Prostate gland (tissue), 2 donors: ENCODE measurements at regions of chr11 and their contacts with region 1.

Region 1: DNA sequence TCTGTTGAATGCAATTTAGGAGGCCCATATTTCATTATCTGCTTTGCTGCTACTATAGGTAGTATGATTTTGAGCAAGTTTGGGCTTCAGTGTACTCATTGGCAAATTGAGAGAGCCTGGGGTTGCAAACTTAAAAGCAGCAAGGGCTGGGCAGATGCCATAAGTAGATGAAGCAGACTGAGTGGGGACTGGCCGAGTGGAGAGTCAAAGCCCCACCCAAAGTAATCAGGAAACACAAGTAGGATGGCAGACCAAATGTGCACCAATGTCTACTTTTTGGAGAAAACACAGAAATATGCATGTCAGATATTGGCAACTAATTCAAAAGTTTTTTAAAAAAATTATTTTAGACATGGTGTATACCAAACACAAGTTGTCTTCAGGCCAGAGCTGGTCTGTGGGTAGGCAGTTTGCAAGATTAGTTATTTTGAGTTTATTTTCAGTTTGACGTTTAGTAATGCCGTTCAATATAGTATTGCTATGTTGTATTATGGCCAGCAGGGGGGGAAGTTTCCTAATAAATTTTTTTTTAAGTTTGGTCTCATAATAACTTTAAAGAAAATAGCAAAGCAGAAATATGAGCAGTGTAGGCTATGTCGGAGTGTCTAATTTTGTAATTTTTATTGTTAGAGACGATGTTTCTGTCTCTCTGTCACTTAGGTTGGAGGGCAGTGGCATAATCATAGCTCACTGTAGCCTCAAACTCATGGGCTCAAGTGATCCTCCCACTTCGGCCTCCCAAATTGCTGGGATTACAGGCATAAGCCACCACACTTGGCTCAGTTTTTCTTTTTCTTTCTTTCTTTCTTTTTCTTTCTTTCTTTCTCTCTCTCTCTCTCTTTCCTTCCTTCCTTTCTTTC is 105.1 kb downstream of the HIPK3 start:
- DNase-seq: peak; percentile 15
- H3K4me3 ChIP-seq: no peak overlapping the region
- H3K27ac ChIP-seq: no peak overlapping the region
- H3K4me1 ChIP-seq: no peaks in the 10 kb centered on the region
- H3K27me3 ChIP-seq: no peaks in the 10 kb centered on the region
- CTCF ChIP-seq: peak in 3 of 4 experiments; percentile 65 to 83 (median 70)
- POLR2A ChIP-seq: no peak

Region 2: DNA sequence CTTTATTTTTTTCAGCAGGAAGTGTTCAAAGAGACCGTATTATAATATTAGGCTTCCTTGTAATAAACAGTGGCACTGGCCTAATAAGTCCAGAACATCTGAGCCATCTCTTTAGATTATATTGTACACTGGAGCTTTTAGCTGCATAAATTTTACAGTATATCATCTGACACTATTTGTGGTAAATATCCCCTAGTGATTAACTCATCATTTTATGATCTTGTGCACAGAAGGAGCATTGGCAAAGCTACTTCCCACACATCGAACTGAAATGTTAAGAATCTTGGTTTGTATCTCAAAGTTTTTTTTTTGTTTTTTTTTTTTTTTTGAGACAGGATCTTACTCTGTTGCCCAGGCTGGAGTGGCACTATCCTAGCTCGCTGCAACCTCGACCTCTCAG is 57.6 kb after region 1 on chr11:
- intact Hi-C with region 1: no loop called
- DNase-seq: no peak
- H3K4me3 ChIP-seq: no peak overlapping the region
- H3K27ac ChIP-seq: no peak overlapping the region
- H3K4me1 ChIP-seq: no peaks in the 10 kb centered on the region
- H3K27me3 ChIP-seq: peaks cover 3% of the 10 kb centered on the region
- CTCF ChIP-seq: no peak
- POLR2A ChIP-seq: no peak

Region 3: DNA sequence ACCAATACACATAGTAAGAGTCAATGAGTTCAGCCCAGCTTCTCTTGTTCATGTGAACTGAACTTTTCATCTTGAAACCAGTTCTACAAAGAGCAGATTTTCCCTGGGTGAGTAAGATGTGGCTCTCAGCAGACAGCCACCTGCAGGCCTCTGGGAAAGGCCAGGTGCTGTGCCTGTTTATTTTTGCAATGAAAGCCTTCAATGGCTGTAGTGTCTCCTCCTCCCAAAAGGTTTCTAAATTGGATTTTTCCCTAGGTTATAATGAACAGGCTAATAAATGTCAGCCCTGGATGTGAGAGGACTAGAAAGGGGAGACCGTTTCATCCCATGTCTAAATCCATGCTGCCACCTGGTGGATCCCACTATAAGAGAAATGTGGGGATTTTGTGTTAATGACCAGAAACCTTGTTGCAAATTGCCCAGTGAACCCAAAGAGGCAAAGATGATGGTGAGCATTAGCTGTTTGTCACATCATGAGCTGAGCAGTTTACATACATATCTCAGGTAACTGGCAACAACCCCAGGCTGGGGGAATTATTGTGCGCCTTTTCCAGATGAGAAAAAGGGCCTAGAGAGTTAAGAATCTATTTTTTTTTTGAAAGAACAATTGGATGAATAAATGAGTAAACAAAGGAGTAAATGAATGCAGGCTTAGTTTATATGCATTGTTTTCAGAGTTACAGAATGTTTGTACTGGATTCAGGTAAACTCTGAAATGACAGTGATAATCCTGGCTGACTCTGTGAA is 325.6 kb after region 1 on chr11:
- intact Hi-C with region 1: loop called (anchors 5 kb)
- DNase-seq: peak; percentile 30
- H3K4me3 ChIP-seq: no peak overlapping the region
- H3K27ac ChIP-seq: no peak overlapping the region
- H3K4me1 ChIP-seq: peaks cover 7% of the 10 kb centered on the region
- H3K27me3 ChIP-seq: no peaks in the 10 kb centered on the region
- CTCF ChIP-seq: peak in 3 of 4 experiments; percentile 51 to 68 (median 58)
- POLR2A ChIP-seq: no peak

Region 4: DNA sequence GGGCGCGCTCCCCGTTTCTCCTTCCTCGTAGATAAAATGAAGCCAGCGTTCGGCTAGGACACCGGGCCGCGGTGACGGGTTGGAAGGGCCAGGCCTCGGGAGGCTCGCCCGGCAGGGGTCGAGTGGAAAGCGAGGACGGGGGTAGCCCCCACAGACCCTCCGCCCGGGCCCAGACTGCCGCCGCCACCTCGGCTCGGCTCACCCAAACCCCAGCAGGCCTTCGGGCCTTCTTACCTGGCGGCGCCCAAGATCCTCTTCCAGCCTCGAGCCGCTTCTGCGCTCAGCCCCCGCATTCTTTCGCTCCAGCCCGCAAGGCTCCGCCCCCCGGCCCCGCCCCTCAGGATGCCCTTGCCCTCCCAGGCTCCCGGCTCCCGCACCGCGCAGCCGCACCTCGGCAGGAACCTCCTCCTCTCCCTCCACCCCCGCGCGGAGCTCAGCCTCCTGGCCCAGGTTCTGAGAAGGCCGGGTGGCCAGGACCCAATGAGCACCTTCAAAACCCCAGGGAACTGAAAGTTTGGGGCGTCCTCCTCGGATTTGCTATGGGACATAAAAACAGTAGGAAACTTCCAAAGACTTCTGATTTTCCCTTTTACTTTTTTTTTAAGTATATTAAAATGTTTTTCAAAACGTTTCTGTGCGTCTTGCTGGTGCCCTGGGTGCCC is 374.0 kb after region 1 on chr11 and contains the start of gene CD59:
- intact Hi-C with region 1: loop called (anchors 10 kb)
- DNase-seq: peak; percentile 96
- H3K4me3 ChIP-seq: peak within 1 kb of the TSS; percentile 68 to 81
- H3K27ac ChIP-seq: peak within 1 kb of the TSS; percentile 88 to 91
- H3K4me1 ChIP-seq: no peaks in the 10 kb centered on the region
- H3K27me3 ChIP-seq: no peaks in the 10 kb centered on the region
- CTCF ChIP-seq: peak in 1 of 4 experiments; percentile 9
- POLR2A ChIP-seq: peak; percentile 97
- total RNA-seq, gene CD59: 205 to 274 TPM

Region 5: DNA sequence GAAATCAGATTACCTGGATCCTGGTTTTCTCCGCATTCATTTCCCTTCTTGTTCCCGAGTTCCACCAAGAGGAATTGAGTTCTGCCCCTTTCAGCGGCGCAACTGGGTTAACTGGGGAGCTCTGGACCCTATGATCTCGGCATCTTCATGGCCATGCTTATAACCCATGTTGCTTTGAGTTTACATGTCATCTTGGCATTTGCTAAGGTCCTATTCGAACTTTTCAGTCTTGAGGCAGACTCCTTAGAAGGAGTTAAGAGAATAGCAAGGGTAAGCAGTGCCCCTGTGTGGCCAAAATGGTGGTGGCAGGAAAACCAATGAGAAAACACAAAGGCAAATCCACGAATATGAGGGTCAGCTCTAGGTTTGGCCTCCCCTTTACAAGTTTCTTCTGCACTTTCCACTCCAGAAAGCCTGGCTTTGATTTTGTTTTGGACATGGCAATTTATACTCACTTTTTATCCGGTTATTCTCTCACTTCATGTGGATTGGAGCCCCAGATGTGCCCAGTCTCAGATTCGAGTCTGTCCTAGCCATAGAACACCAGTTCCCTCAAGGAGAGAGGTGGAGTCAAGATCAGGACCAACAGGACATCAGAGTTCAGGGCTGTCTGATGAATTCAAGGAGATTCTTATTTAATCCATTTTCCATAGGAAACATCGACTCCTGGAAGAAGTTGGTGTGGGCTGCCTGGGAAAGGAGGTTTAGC is 467.3 kb after region 1 on chr11:
- intact Hi-C with region 1: loop called (anchors 5 kb)
- DNase-seq: peak; percentile 50
- H3K4me3 ChIP-seq: peak overlapping the region; percentile 7 to 32
- H3K27ac ChIP-seq: no peak overlapping the region
- H3K4me1 ChIP-seq: peaks cover 6% of the 10 kb centered on the region
- H3K27me3 ChIP-seq: peaks cover 5% of the 10 kb centered on the region
- CTCF ChIP-seq: peak in 3 of 4 experiments; percentile 50 to 76 (median 53)
- POLR2A ChIP-seq: no peak